ENCODE measurements at regions of chr13 and their contacts with region 1.

Region 1: GRCh38 chr13:40116008-40116407 is 460.5 kb downstream of the COG6 start:
- DNase-seq: peak; percentile 96
- H3K4me3 Mint-ChIP-seq: no peak overlapping the region
- H3K27ac Mint-ChIP-seq: peak overlapping the region; percentile 99
- H3K4me1 Mint-ChIP-seq: peaks cover 69% of the 10 kb centered on the region
- H3K27me3 Mint-ChIP-seq: no peaks in the 10 kb centered on the region
- CTCF ChIP-seq: no peak

Region 2: GRCh38 chr13:39859898-39860297 is 256.1 kb before region 1 on chr13:
- CTCF ChIA-PET with region 1: no interaction called
- POLR2A ChIA-PET with region 1: no interaction called
- intact Hi-C with region 1: no loop called
- DNase-seq: no peak
- H3K4me3 Mint-ChIP-seq: no peak overlapping the region
- H3K27ac Mint-ChIP-seq: no peak overlapping the region
- H3K4me1 Mint-ChIP-seq: peaks cover 6% of the 10 kb centered on the region
- H3K27me3 Mint-ChIP-seq: no peaks in the 10 kb centered on the region
- CTCF ChIP-seq: no peak

Region 3: DNA sequence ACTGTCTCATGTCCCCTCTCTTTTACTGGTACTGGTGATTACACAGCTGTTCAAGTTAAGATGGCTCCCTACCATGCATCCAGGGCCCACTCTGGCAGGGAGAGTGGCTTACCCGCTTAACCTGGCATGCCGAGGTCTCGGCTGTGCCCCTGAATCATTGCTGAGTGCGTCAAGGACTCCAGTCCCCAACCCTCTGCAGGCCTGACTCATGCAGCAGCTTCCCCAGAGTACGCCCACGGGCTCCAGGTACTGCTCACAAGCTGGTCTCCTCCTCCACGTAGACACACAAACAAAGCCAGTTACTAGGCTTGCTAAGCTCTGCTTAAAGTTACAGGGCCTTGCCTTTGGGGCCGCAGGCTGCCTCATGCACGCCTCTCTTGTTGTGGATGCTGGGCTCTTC is 13.2 kb before region 1 on chr13:
- CTCF ChIA-PET with region 1: interaction called, 4 read pairs
- POLR2A ChIA-PET with region 1: interaction called, 22 read pairs
- intact Hi-C with region 1: no loop called
- DNase-seq: peak; percentile 94
- H3K4me3 Mint-ChIP-seq: no peak overlapping the region
- H3K27ac Mint-ChIP-seq: peak overlapping the region; percentile 85
- H3K4me1 Mint-ChIP-seq: peaks cover 25% of the 10 kb centered on the region
- H3K27me3 Mint-ChIP-seq: no peaks in the 10 kb centered on the region
- CTCF ChIP-seq: no peak

Region 4: GRCh38 chr13:40130871-40131636 is 15.0 kb after region 1 on chr13:
- CTCF ChIA-PET with region 1: interaction called, 3 read pairs
- POLR2A ChIA-PET with region 1: interaction called, 26 read pairs
- intact Hi-C with region 1: no loop called
- DNase-seq: peak; percentile 89
- H3K4me3 Mint-ChIP-seq: no peak overlapping the region
- H3K27ac Mint-ChIP-seq: peak overlapping the region; percentile 92
- H3K4me1 Mint-ChIP-seq: peaks cover 29% of the 10 kb centered on the region
- H3K27me3 Mint-ChIP-seq: no peaks in the 10 kb centered on the region
- CTCF ChIP-seq: no peak

Region 5: GRCh38 chr13:40149611-40150274 is 33.7 kb after region 1 on chr13:
- CTCF ChIA-PET with region 1: interaction called, 4 read pairs
- POLR2A ChIA-PET with region 1: interaction called, 13 read pairs
- intact Hi-C with region 1: no loop called
- DNase-seq: peak; percentile 90
- H3K4me3 Mint-ChIP-seq: no peak overlapping the region
- H3K27ac Mint-ChIP-seq: peak overlapping the region; percentile 94
- H3K4me1 Mint-ChIP-seq: peaks cover 50% of the 10 kb centered on the region
- H3K27me3 Mint-ChIP-seq: no peaks in the 10 kb centered on the region
- CTCF ChIP-seq: no peak